ENCODE measurements at regions of chr1 and their contacts with region 1.

Region 1: GRCh38 chr1:170020859-170021258 is 53.6 kb downstream of the KIFAP3 start:
- DNase-seq: no peak
- H3K4me3 ChIP-seq: no peak overlapping the region
- H3K27ac ChIP-seq: no peak overlapping the region
- H3K4me1 ChIP-seq: no peaks in the 10 kb centered on the region
- H3K27me3 ChIP-seq: no peaks in the 10 kb centered on the region
- CTCF ChIP-seq: no peak
- POLR2A ChIP-seq: no peak

Region 2: DNA sequence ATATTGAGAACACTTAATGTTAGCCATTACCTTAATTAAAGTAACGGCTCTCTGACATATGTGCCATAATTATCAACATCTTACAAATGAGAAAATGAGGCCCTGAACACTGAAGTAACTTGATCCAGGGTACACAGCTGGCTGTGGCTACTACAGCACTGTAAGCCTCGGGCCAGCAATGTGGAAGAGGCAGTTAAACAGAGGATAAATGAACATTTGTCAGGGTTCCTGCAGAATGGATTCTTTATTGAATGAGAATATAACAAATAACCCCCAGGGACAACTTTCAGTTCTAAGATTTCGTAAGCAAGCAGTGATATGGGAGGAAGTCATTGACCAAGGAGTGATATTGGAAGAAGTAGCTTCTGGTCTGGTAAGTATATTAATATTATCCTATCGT is 56.7 kb before region 1 on chr1:
- CTCF ChIA-PET with region 1: no interaction called
- POLR2A ChIA-PET with region 1: no interaction called
- dilution Hi-C with region 1: no loop called
- intact Hi-C with region 1: no loop called
- DNase-seq: no peak
- H3K4me3 ChIP-seq: no peak overlapping the region
- H3K27ac ChIP-seq: no peak overlapping the region
- H3K4me1 ChIP-seq: no peaks in the 10 kb centered on the region
- H3K27me3 ChIP-seq: no peaks in the 10 kb centered on the region
- CTCF ChIP-seq: no peak
- POLR2A ChIP-seq: no peak

Region 3: GRCh38 chr1:169989246-169989645 is 31.6 kb before region 1 on chr1:
- CTCF ChIA-PET with region 1: no interaction called
- POLR2A ChIA-PET with region 1: no interaction called
- dilution Hi-C with region 1: no loop called
- intact Hi-C with region 1: loop called (anchors 5 kb)
- DNase-seq: peak; percentile 31
- H3K4me3 ChIP-seq: no peak overlapping the region
- H3K27ac ChIP-seq: no peak overlapping the region
- H3K4me1 ChIP-seq: peaks cover 10% of the 10 kb centered on the region
- H3K27me3 ChIP-seq: no peaks in the 10 kb centered on the region
- CTCF ChIP-seq: no peak
- POLR2A ChIP-seq: no peak